ENCODE measurements at regions of chr17 and their contacts with region 1.

Region 1: GRCh38 chr17:64262417-64263260 is at the start of gene TEX2:
- DNase-seq: peak; percentile 39 to 87 (median 60)
- ATAC-seq: peak; percentile 47
- H3K4me3 ChIP-seq: peak within 1 kb of the TSS; percentile 70
- H3K4me3 Mint-ChIP-seq: peak within 1 kb of the TSS; percentile 92
- H3K27ac ChIP-seq: peak within 1 kb of the TSS; percentile 70 to 86
- H3K27ac Mint-ChIP-seq: peak within 1 kb of the TSS; percentile 95
- H3K4me1 ChIP-seq: peaks cover 28% of the 10 kb centered on the region
- H3K4me1 Mint-ChIP-seq: peaks cover 46% of the 10 kb centered on the region
- H3K27me3 ChIP-seq: no peaks in the 10 kb centered on the region
- H3K27me3 Mint-ChIP-seq: peaks cover 6% of the 10 kb centered on the region
- CTCF ChIP-seq: no peak
- total RNA-seq, gene TEX2: 8.6 to 8.9 TPM

Region 2: DNA sequence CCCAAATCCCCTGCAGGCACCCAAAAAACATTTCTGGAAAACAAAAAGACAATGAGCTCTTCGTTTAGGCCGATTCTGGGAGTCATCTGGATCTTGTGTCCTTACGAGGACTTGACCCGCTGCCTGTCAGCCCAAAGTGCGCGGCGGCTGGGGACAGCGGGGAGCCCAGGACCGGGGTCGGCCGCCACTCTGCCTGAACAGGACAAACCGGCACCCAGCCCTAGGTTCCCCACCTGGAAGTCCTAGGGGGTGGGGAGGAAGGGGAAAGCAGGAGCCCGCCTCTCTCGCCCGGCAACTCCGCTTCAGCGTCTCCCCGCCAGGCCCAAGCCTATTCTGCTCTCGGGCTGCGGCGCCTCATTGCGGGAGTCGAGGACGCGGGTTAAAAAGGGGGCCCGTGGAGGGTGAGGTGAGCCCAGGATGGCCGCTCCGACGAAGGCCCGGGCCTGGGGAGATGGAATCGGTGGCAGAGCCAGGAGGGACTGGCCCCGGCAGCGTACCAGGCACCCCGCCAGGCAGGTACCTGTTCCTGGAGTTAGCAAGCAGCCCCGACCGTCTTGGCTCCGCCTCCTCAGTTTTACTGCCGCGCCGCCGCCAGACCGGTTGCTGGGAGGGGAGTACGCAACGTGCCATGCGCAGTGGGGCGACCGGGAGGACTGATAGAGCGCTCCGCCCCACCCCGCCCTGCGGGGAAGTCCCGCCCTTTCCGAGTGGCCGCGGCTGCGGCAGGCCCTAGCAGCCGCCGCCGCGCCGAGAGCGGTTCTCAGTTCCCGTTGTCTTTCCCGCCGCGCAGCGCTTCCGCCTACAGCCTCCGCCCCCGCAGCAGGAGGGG is 521.2 kb before region 1 on chr17 and contains the start of gene STRADA:
- CTCF ChIA-PET with region 1: no interaction called
- POLR2A ChIA-PET with region 1: no interaction called
- intact Hi-C with region 1: loop called in 1 of 2 experiments (anchors 10 kb)
- DNase-seq: peak; percentile 98 to 100 (median 99)
- ATAC-seq: peak; percentile 88
- H3K4me3 ChIP-seq: peak within 1 kb of the TSS; percentile 95
- H3K4me3 Mint-ChIP-seq: peak within 1 kb of the TSS; percentile 93
- H3K27ac ChIP-seq: peak within 1 kb of the TSS; percentile 94
- H3K27ac Mint-ChIP-seq: peak within 1 kb of the TSS; percentile 91
- H3K4me1 ChIP-seq: peaks cover 33% of the 10 kb centered on the region
- H3K4me1 Mint-ChIP-seq: peaks cover 24% of the 10 kb centered on the region
- H3K27me3 ChIP-seq: no peaks in the 10 kb centered on the region
- H3K27me3 Mint-ChIP-seq: no peaks in the 10 kb centered on the region
- CTCF ChIP-seq: no peak
- total RNA-seq, gene STRADA: 50.9 to 51.0 TPM

Region 3: DNA sequence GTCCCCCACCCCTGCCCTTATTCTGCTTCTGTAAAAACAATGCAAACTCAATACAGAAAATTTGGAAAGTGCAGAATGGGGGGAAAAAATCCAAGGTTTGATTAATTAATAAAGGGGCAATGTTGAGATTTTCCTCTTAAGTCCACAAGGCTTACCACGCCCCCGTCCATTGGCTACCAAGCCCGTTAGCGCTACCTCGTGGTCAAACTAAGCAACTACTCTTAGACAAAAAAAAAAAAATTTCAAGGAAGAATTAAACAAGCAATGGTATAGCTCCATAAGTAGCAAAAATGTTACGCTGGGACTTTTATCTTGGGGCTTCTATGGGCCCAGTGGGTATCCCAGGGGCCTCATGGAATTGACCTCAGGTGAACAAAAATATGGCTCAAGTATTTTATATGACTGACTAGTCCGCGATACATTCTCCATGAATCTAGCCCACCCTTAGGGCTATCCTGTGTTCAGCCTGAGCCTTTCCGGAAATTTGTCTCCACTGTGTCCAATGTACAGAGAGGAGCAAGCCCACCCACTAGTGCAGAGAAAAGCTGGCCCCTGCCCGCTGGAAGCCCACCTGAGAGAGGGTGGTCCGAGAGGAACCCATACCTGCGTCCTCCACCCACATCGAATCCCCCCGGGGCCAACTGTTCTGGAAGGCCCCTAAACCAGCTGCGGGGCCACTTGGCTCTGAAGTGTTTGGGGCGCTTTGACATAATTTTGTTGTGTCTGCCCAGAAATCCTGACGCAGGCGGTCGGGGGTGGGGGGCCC is 19.5 kb after region 1 on chr17:
- CTCF ChIA-PET with region 1: no interaction called
- POLR2A ChIA-PET with region 1: no interaction called
- intact Hi-C with region 1: no loop called
- DNase-seq: peak; percentile 9 to 83 (median 40)
- ATAC-seq: peak; percentile 74
- H3K4me3 ChIP-seq: no peak overlapping the region
- H3K4me3 Mint-ChIP-seq: no peak overlapping the region
- H3K27ac ChIP-seq: no peak overlapping the region
- H3K27ac Mint-ChIP-seq: no peak overlapping the region
- H3K4me1 ChIP-seq: peaks cover 3% of the 10 kb centered on the region
- H3K4me1 Mint-ChIP-seq: no peaks in the 10 kb centered on the region
- H3K27me3 ChIP-seq: no peaks in the 10 kb centered on the region
- H3K27me3 Mint-ChIP-seq: no peaks in the 10 kb centered on the region
- CTCF ChIP-seq: peak; percentile 63

Region 4: GRCh38 chr17:64496786-64497564 is 234.3 kb after region 1 on chr17 and contains the start of gene POLG2:
- CTCF ChIA-PET with region 1: no interaction called
- POLR2A ChIA-PET with region 1: no interaction called
- intact Hi-C with region 1: loop called in 1 of 2 experiments (anchors 5 kb)
- DNase-seq: peak; percentile 93 to 99 (median 95)
- ATAC-seq: peak; percentile 77
- H3K4me3 ChIP-seq: peak within 1 kb of the TSS; percentile 77
- H3K4me3 Mint-ChIP-seq: peak within 1 kb of the TSS; percentile 100
- H3K27ac ChIP-seq: peak within 1 kb of the TSS; percentile 85 to 91
- H3K27ac Mint-ChIP-seq: peak within 1 kb of the TSS; percentile 99
- H3K4me1 ChIP-seq: peaks cover 44% of the 10 kb centered on the region
- H3K4me1 Mint-ChIP-seq: peaks cover 83% of the 10 kb centered on the region
- H3K27me3 ChIP-seq: no peaks in the 10 kb centered on the region
- H3K27me3 Mint-ChIP-seq: no peaks in the 10 kb centered on the region
- CTCF ChIP-seq: peak; percentile 56
- total RNA-seq, gene POLG2: 32.8 to 34.1 TPM

Region 5: DNA sequence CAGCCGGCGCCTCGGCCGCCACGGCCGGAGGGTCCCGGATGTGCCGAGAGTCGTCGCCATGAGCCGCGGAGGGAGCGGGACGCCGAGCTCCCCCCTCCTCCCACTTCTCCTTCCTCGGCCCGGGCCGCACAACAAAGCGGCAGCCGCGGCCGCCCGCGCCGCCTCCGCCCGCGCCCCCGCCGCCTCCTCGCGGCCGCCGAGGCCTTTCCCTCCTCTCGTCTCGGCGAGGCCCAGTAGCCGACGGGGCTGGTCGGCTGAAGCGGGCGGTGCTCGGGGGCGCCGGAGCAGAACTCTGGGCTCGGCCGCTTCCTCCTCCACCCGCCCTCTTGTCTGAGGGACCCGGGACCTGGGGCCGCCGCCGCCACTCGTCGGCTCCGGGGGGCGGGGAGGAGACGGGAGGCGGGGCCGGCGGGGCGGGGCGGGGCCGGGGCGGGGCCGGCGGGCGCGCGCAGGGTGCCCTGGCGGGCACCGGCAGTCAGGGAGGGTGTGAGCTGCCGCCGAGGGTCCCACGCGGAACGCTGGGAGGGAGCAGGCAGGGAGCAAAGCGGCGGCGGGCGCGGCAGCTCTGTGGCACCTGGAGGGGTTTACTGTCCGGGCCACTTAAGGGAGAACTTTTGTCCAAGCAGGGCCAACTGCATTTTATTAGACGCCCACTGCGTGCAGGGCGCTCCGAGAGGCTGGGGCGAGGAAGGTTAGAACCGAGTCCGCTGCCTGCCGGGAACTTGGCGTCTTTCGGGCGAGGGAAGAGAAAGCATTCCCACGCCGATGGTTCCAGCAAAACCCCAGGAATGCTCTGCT is 399.5 kb after region 1 on chr17 and contains the start of gene SMURF2:
- CTCF ChIA-PET with region 1: no interaction called
- POLR2A ChIA-PET with region 1: no interaction called
- intact Hi-C with region 1: loop called in 1 of 2 experiments (anchors 5 kb)
- DNase-seq: peak; percentile 59 to 88 (median 76)
- ATAC-seq: peak; percentile 80
- H3K4me3 ChIP-seq: peak within 1 kb of the TSS; percentile 87
- H3K4me3 Mint-ChIP-seq: peak within 1 kb of the TSS; percentile 98
- H3K27ac ChIP-seq: peak within 1 kb of the TSS; percentile 13 to 20
- H3K27ac Mint-ChIP-seq: peak within 1 kb of the TSS; percentile 95
- H3K4me1 ChIP-seq: peaks cover 22% of the 10 kb centered on the region
- H3K4me1 Mint-ChIP-seq: peaks cover 47% of the 10 kb centered on the region
- H3K27me3 ChIP-seq: no peaks in the 10 kb centered on the region
- H3K27me3 Mint-ChIP-seq: no peaks in the 10 kb centered on the region
- CTCF ChIP-seq: no peak
- total RNA-seq, gene SMURF2: 28.0 to 29.7 TPM